ENCODE measurements at regions of chr5 and their contacts with region 1.

Region 1: GRCh38 chr5:86880785-86881492 is 263.2 kb downstream of the COX7C start:
- DNase-seq: peak; percentile 57
- H3K4me3 Mint-ChIP-seq: no peak overlapping the region
- H3K27ac Mint-ChIP-seq: no peak overlapping the region
- H3K4me1 Mint-ChIP-seq: no peaks in the 10 kb centered on the region
- H3K27me3 Mint-ChIP-seq: peaks cover 4% of the 10 kb centered on the region

Region 2: DNA sequence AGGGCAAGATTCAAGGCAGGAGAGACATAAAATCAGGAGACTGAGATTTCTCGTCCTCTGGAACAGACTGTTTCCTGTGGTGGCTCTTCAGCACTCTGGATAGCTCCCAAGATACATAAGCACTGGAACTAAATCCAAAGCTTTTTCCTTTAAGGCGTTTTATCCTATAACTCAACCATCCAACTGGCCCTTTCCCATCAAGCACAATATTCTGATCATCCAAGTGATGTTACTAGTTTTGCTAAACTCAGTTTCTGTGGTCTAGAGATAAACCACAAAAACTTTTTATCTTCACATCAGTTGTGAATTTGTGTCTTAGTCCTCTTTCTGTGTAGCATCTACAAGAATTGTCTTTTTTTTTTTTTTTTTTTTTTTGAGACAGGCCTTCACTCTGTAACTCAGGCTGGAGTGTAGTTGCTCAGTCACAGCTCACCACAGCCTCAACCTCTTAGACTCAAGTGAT is 36.2 kb after region 1 on chr5:
- CTCF ChIA-PET with region 1: interaction called, 11 read pairs
- POLR2A ChIA-PET with region 1: no interaction called
- DNase-seq: peak; percentile 42
- H3K4me3 Mint-ChIP-seq: no peak overlapping the region
- H3K27ac Mint-ChIP-seq: no peak overlapping the region
- H3K4me1 Mint-ChIP-seq: peaks cover 21% of the 10 kb centered on the region
- H3K27me3 Mint-ChIP-seq: peaks cover 29% of the 10 kb centered on the region

Region 3: DNA sequence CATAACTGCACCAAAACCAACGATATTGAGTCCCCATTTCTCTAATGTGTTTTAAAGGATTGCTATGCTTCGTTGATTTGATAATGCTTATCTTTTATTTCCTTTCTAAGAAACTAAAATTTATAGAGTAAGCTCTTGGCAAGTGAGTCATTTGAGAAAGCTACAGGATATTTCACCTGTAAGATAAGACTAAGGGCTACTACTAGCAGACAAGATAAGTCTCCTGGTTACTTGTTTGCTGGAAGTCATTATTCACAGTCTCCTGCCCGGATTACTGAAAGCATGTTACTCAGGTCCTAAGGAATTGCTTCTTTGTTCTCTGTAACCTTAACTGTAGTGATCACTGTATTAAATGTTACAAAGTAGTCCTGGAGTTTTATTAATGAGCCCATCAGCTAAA is 70.8 kb after region 1 on chr5:
- CTCF ChIA-PET with region 1: no interaction called
- POLR2A ChIA-PET with region 1: no interaction called
- DNase-seq: no peak
- H3K4me3 Mint-ChIP-seq: no peak overlapping the region
- H3K27ac Mint-ChIP-seq: no peak overlapping the region
- H3K4me1 Mint-ChIP-seq: no peaks in the 10 kb centered on the region
- H3K27me3 Mint-ChIP-seq: peaks cover 24% of the 10 kb centered on the region

Region 4: GRCh38 chr5:86968301-86968753 is 87.4 kb after region 1 on chr5:
- CTCF ChIA-PET with region 1: interaction called, 52 read pairs
- POLR2A ChIA-PET with region 1: no interaction called
- DNase-seq: no peak
- H3K4me3 Mint-ChIP-seq: no peak overlapping the region
- H3K27ac Mint-ChIP-seq: no peak overlapping the region
- H3K4me1 Mint-ChIP-seq: peaks cover 11% of the 10 kb centered on the region
- H3K27me3 Mint-ChIP-seq: peaks cover 16% of the 10 kb centered on the region

Region 5: DNA sequence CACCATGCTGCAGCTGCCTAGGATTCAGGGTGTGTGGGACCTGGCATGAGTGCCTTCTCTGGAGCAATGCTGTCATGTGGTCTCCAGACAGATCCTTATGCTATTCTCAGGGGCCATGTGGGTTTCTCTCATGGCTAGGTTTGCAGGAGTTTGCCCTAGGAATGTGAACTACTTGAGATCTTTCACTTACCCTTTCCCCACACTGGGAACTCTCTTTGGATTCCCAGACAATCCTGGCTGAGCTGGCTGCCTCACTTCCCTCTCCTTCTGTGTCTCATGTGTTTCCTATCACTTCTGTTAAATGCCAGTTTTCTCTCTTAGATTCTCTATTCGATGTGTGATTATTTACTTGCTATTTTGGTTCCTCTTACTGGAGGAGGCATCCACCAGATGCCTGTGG is 116.6 kb after region 1 on chr5:
- CTCF ChIA-PET with region 1: no interaction called
- POLR2A ChIA-PET with region 1: no interaction called
- DNase-seq: no peak
- H3K4me3 Mint-ChIP-seq: no peak overlapping the region
- H3K27ac Mint-ChIP-seq: no peak overlapping the region
- H3K4me1 Mint-ChIP-seq: no peaks in the 10 kb centered on the region
- H3K27me3 Mint-ChIP-seq: peaks cover 8% of the 10 kb centered on the region

Region 6: DNA sequence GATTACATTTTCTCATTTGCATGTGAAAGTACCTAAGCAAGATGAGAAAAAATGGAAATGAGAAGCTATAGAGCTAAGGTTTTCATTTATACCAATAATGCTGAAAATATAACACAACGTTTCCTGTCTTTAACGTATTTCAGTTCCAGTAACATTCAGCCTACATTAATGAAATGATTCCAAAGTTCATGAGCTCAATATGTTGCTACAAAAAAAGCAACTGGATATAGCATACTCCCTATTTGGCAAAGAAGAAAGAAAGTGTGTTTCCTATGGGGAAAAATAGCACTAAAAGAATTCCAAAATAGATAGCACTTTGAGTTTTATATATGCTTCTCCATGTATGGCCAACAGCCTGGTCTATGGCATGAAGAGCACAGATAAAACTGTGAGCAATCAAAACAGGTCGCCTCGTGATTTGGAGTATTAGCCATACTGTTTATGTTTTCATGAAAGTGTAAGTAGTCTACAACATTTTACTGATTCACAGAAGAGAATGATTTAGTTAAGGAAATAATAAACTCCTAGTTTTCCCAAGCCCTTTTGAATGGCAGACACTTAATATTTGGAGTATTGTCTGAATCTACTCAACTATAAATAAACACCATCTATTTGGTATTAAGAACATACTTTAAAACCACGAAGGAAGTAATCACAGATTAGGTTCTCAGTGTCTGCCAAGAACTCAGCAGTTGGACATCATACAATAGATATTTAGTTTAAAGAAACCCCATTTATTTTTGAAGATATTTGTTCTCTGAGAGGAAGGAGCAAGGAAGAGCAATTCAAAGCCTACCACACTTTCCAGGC is 128.0 kb after region 1 on chr5:
- CTCF ChIA-PET with region 1: interaction called, 27 read pairs
- POLR2A ChIA-PET with region 1: no interaction called
- DNase-seq: no peak
- H3K4me3 Mint-ChIP-seq: no peak overlapping the region
- H3K27ac Mint-ChIP-seq: no peak overlapping the region
- H3K4me1 Mint-ChIP-seq: no peaks in the 10 kb centered on the region
- H3K27me3 Mint-ChIP-seq: peaks cover 5% of the 10 kb centered on the region

Measured in activated CD4-positive, alpha-beta memory T cell treated with anti-CD3 and anti-CD28 coated beads, Interleukin-2, amount 10 ng/mL, durations not matched to agents 7 days and 5 days (primary cell).